Naive thymus-derived CD4-positive, alpha-beta T cell (primary cell): ENCODE measurements at regions of chr7 and their contacts with region 1.

Region 1: GRCh38 chr7:151028131-151028947 is at the start of gene ABCB8:
- DNase-seq: peak; percentile 89 to 100 (median 99)
- ATAC-seq: peak; percentile 94
- H3K4me3 ChIP-seq: peak within 1 kb of the TSS; percentile 78
- H3K4me3 Mint-ChIP-seq: peak within 1 kb of the TSS; percentile 83 to 98 (median 92)
- H3K27ac ChIP-seq: peak within 1 kb of the TSS; percentile 94
- H3K27ac Mint-ChIP-seq: peak within 1 kb of the TSS; percentile 95 to 100 (median 99)
- H3K4me1 ChIP-seq: peaks cover 6% of the 10 kb centered on the region in 2 donors
- H3K4me1 Mint-ChIP-seq: peaks cover 20 to 40% (median 29%) of the 10 kb centered on the region in 7 donors
- H3K27me3 ChIP-seq: no peaks in the 10 kb centered on the region
- H3K27me3 Mint-ChIP-seq: peaks cover 0 to 6% (median 0%) of the 10 kb centered on the region in 5 donors
- total RNA-seq, gene ABCB8: 59.7 to 88.0 (median 76.6) TPM

Region 2: DNA sequence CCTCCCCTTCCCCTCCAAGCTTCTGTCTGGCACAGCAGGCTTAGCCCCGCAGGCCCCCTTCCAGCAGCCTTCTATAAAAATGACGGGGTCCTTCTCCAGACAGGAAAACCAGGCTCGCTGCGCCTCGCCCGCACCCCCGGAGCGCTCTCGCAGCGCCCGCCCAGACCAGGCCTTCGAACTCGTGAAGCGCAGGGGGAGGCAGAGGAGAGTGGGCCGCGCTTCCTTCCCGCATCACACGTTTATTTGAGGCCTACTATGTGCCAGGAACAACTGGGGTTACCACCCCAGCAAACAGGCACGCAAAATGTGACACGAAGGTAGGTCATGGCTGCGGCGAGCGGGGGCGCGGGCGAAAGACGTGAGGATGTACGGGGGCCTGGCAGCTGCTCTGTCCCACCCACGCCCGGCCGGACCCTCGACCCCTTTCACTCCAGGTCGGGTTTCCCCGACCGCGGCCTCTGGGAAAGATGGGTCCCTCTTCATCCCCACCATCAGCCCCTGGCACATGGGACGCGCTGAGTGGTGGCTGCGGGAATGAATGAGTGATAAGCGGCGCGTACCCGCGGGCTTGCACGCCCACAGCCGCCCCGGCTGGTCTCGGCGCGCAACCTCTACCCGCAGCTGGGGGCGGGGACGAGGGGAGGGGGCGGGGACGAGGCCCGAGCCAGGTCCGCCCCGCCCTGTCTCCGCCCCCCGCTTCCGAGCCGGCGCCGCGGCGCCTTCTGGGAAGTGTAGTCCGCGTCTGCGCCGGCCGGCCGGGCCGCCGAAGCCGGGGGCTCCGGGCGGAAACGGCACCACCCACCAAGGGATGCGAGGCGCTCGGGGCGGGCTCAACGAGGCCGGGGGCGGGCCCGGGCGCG is 1314.1 kb before region 1 on chr7:
- CTCF ChIA-PET with region 1: no interaction called
- POLR2A ChIA-PET with region 1: no interaction called
- intact Hi-C with region 1: loop called in 1 of 2 experiments (anchors 2 kb)
- DNase-seq: peak; percentile 68 to 89 (median 84)
- ATAC-seq: peak; percentile 99
- H3K4me3 ChIP-seq: peak overlapping the region; percentile 75
- H3K4me3 Mint-ChIP-seq: peak overlapping the region; percentile 71 to 87 (median 80)
- H3K27ac ChIP-seq: peak overlapping the region; percentile 72
- H3K27ac Mint-ChIP-seq: peak overlapping the region in 4 of 9 donors; percentile 5 to 72 (median 54)
- H3K4me1 ChIP-seq: peaks cover 10 to 13% of the 10 kb centered on the region in 2 donors
- H3K4me1 Mint-ChIP-seq: peaks cover 12 to 26% (median 19%) of the 10 kb centered on the region in 7 donors
- H3K27me3 ChIP-seq: no peaks in the 10 kb centered on the region
- H3K27me3 Mint-ChIP-seq: peaks cover 0 to 4% (median 0%) of the 10 kb centered on the region in 5 donors

Region 3: GRCh38 chr7:150322833-150323681 is 705.3 kb before region 1 on chr7 and contains the starts of genes ACTR3C and LRRC61:
- CTCF ChIA-PET with region 1: no interaction called
- POLR2A ChIA-PET with region 1: no interaction called
- intact Hi-C with region 1: loop called in 1 of 2 experiments (anchors 5 kb)
- DNase-seq: peak; percentile 23 to 75 (median 41)
- ATAC-seq: peak; percentile 67
- H3K4me3 ChIP-seq: peak within 1 kb of the TSS; percentile 95
- H3K4me3 Mint-ChIP-seq: peak within 1 kb of the TSS; percentile 88 to 100 (median 98)
- H3K27ac ChIP-seq: peak within 1 kb of the TSS; percentile 85
- H3K27ac Mint-ChIP-seq: peak within 1 kb of the TSS; percentile 94 to 99 (median 98)
- H3K4me1 ChIP-seq: peaks cover 5 to 21% of the 10 kb centered on the region in 2 donors
- H3K4me1 Mint-ChIP-seq: peaks cover 25 to 57% (median 44%) of the 10 kb centered on the region in 7 donors
- H3K27me3 ChIP-seq: no peaks in the 10 kb centered on the region
- H3K27me3 Mint-ChIP-seq: no peaks in the 10 kb centered on the region
- total RNA-seq, gene ACTR3C: 7.0 to 13.2 (median 10.6) TPM
- total RNA-seq, gene LRRC61: 8.3 to 30.0 (median 11.5) TPM

Region 4: DNA sequence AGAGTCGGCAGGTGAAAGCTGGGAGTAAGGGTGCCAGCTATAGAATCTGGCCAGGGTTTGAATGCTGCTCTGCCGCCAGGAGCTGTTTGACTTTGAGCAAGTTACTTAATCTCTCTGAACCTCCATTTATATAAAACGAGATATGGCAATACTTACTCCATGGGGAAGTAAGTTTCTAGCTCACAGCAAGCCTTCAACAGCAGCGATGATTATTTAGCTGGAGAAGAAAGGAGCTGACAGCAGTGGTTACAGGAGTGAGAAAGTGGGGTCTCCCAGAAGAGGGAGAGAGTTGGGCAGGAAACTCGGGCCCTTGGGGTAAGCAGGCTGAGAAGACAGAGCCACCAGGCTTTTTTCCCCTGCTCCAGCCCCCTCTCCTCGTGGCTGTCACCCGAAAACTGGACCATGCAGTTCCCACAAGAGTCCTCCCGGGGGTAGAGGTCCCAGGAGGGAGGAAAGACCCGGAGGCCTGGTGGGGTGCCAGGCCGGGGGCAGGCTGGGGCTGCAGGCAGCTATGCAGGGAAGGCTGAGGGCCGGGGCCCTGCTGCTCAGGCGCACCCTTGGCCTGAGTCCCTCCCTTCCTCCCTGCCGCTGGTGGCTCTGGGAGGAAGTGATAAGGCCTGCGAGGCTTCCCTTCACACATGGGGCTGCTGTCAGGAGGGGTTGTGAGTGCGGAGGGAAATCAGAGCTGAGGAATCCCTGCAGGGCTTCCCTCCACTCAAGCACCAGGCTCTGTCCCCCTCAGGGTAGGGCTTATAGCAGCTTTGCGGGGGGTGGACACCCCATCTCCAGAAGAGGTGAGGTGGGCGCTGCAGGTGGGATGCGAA is 34.0 kb before region 1 on chr7:
- CTCF ChIA-PET with region 1: interaction called, 3 read pairs
- POLR2A ChIA-PET with region 1: interaction called, 12 read pairs
- intact Hi-C with region 1: no loop called
- DNase-seq: peak in 2 of 9 donors; percentile 33 to 37
- ATAC-seq: peak; percentile 65
- H3K4me3 ChIP-seq: peak overlapping the region; percentile 29
- H3K4me3 Mint-ChIP-seq: peak overlapping the region; percentile 21 to 75 (median 64)
- H3K27ac ChIP-seq: peak overlapping the region; percentile 68
- H3K27ac Mint-ChIP-seq: peak overlapping the region; percentile 31 to 87 (median 63)
- H3K4me1 ChIP-seq: peaks cover 3 to 51% of the 10 kb centered on the region in 2 donors
- H3K4me1 Mint-ChIP-seq: peaks cover 19 to 60% (median 44%) of the 10 kb centered on the region in 7 donors
- H3K27me3 ChIP-seq: no peaks in the 10 kb centered on the region
- H3K27me3 Mint-ChIP-seq: peaks cover 0 to 3% (median 0%) of the 10 kb centered on the region in 5 donors

Region 5: DNA sequence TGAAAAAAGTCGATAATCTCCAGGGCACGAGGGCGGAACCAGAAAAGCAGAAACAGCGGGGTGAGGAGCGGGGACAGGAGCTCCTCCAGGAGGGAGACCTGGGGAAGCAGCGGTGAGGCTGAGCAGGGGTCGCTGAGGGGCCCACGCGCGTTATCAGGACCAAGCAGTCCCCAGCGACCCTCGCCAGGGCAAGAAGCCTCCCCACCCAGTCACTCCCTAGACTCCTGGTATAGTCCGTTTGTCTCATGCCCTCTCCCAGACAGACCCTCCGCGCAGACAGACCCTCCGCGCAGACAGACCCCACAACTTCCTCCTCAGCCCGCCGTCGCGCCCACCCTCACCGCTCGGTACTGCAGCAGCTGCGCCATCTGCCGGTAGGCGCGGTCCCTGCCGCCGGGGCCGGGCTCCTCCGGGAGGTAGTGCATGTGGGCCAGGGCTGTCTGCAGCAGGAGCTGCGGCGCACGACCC is 10.4 kb before region 1 on chr7:
- CTCF ChIA-PET with region 1: interaction called, 12 read pairs
- POLR2A ChIA-PET with region 1: interaction called, 28 read pairs
- intact Hi-C with region 1: loop called (anchors 1 kb)
- DNase-seq: peak; percentile 67 to 87 (median 75)
- ATAC-seq: peak; percentile 68
- H3K4me3 ChIP-seq: peak overlapping the region; percentile 65
- H3K4me3 Mint-ChIP-seq: peak overlapping the region; percentile 79 to 94 (median 88)
- H3K27ac ChIP-seq: peak overlapping the region; percentile 97
- H3K27ac Mint-ChIP-seq: peak overlapping the region; percentile 82 to 100 (median 94)
- H3K4me1 ChIP-seq: peaks cover 30 to 55% of the 10 kb centered on the region in 2 donors
- H3K4me1 Mint-ChIP-seq: peaks cover 35 to 67% (median 53%) of the 10 kb centered on the region in 7 donors
- H3K27me3 ChIP-seq: no peaks in the 10 kb centered on the region
- H3K27me3 Mint-ChIP-seq: peaks cover 0 to 35% (median 0%) of the 10 kb centered on the region in 5 donors

Region 6: GRCh38 chr7:151057989-151058780 is 29.8 kb after region 1 on chr7:
- CTCF ChIA-PET with region 1: interaction called, 3 read pairs
- POLR2A ChIA-PET with region 1: interaction called, 10 read pairs
- intact Hi-C with region 1: loop called (anchors 1 kb)
- DNase-seq: peak; percentile 80 to 99 (median 97)
- ATAC-seq: peak; percentile 96
- H3K4me3 ChIP-seq: peak overlapping the region; percentile 78
- H3K4me3 Mint-ChIP-seq: peak overlapping the region; percentile 91 to 99 (median 94)
- H3K27ac ChIP-seq: peak overlapping the region; percentile 92
- H3K27ac Mint-ChIP-seq: peak overlapping the region; percentile 86 to 96 (median 93)
- H3K4me1 ChIP-seq: peaks cover 25 to 32% of the 10 kb centered on the region in 2 donors
- H3K4me1 Mint-ChIP-seq: peaks cover 25 to 41% (median 38%) of the 10 kb centered on the region in 7 donors
- H3K27me3 ChIP-seq: no peaks in the 10 kb centered on the region
- H3K27me3 Mint-ChIP-seq: no peaks in the 10 kb centered on the region

Region 7: GRCh38 chr7:151341357-151342101 is 313.2 kb after region 1 on chr7 and contains the start of gene NUB1:
- CTCF ChIA-PET with region 1: no interaction called
- POLR2A ChIA-PET with region 1: no interaction called
- intact Hi-C with region 1: loop called (anchors 1 to 10 kb)
- DNase-seq: peak; percentile 79 to 99 (median 90)
- ATAC-seq: peak; percentile 98
- H3K4me3 ChIP-seq: peak within 1 kb of the TSS; percentile 84
- H3K4me3 Mint-ChIP-seq: peak within 1 kb of the TSS; percentile 84 to 91 (median 87)
- H3K27ac ChIP-seq: peak within 1 kb of the TSS; percentile 88
- H3K27ac Mint-ChIP-seq: peak within 1 kb of the TSS; percentile 83 to 96 (median 90)
- H3K4me1 ChIP-seq: peaks cover 19 to 21% of the 10 kb centered on the region in 2 donors
- H3K4me1 Mint-ChIP-seq: peaks cover 10 to 44% (median 33%) of the 10 kb centered on the region in 7 donors
- H3K27me3 ChIP-seq: no peaks in the 10 kb centered on the region
- H3K27me3 Mint-ChIP-seq: no peaks in the 10 kb centered on the region
- total RNA-seq, gene NUB1: 75.1 to 116 (median 82.0) TPM